Astrocyte of the cerebellum (primary cell): ENCODE measurements at regions of chr10 and their contacts with region 1.

Region 1: DNA sequence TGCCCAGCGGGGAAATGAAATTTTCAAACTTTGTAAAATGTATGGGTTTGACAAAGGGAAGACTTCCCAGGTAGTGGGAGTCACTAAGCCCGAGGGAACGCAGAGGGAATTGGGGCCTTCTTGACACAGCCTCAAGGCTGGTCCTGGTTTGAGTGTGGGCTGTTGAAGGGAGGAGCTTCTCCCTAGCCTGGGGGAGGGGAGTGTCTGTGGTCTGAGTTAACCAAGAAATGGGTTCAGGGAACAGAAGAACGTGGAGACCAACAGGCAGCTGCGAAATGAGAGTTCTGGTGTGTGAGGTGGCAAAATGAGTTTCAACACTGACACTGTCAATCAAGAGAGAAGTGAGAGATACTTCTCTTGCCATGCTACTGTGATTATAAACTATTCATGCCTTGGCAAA is 32.7 kb upstream of the BAMBI start:
- DNase-seq: no peak
- H3K4me3 ChIP-seq: no peak overlapping the region
- CTCF ChIP-seq: no peak

Region 2: DNA sequence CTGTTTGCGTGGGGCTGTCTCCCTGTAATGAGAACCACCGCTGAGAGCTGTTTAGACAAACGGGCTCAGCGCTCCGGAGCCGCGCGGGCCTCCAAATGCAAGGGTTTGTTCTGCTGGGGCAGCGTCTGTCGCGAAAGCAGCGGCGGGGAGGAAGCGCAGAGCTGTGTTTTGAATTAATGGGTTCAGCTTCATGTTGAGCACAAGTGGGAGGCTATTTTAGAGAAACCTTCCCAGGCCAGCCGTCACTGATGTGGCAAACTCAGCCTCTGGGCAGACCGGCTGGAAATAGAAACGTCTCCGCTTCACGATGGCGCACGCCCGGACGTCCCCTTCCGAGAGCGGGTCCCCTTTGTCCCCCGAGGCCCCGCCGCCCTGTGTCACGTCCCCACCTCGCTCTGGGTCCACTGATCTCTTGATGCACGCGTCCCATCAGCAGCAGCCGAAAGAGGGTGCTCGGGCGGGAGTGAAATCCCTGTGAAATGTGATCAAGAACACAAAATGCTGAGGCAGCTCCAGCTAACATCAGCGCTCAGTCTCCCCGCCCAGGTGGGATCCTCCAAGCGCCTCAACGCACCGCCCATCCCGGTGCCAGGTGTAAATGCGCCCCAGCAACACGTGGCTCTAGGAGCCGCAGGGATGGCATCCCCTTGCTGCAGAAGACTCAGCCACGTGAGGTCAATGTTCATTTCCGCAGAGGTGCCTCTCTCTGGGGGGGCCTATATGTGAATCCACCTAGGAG is 77.6 kb after region 1 on chr10:
- in situ Hi-C with region 1: no loop called
- DNase-seq: no peak
- H3K4me3 ChIP-seq: peak overlapping the region; percentile 44
- CTCF ChIP-seq: no peak

Region 3: GRCh38 chr10:29443745-29444523 is 799.3 kb after region 1 on chr10:
- in situ Hi-C with region 1: loop called (anchors 10 kb)
- DNase-seq: no peak
- H3K4me3 ChIP-seq: no peak overlapping the region
- CTCF ChIP-seq: no peak